Calu3 (cell line): ENCODE measurements at regions of chr1 and their contacts with region 1.

Region 1: DNA sequence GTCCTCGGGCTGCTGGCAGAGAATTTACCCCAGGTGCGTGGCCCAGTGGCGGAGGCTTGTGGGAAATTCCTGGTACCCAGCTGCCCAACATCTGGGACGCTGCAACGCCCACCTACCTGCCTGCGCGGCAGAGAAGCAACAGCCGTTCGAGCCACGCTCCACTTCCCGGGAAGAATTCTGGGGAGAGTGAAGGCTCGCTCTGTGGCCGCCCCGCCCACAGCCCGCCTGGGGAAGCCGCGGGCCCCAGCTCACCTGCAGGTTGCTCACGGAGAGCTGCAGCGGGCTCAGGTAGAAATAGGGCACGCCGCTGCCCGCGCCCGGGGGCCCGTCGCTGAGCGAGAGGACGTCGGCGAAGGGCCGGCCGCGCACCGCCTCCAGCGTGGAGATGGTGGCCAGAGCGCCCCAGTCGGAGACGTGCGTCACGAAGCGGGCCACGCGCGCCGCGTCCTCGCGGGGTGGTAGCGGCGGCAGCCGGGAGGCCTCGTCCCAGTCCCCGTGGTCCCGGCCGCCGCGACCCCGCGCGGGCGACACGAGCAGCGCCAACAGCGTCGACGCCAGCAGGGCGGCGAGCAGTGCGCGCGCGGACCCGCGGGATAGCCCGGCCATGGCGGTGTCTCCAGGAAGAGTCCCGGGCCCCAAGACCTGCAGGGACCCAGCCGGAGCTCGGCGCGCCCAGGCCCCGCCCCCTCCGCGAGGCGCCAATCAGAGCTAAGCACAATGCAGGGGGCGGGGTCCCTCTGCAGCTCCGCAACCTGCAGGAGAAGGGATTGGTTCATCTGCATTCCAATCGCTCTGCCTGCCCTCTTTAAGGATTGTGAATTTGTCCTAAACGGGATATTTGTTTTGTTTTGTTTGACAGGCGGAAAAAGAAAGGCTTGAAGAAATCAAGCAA is at the start of gene CREG1:
- DNase-seq: peak; percentile 99
- H3K4me3 Mint-ChIP-seq: peak within 1 kb of the TSS; percentile 77
- H3K27ac Mint-ChIP-seq: peak within 1 kb of the TSS; percentile 46
- H3K4me1 Mint-ChIP-seq: peaks cover 20% of the 10 kb centered on the region
- H3K27me3 Mint-ChIP-seq: no peaks in the 10 kb centered on the region
- CTCF ChIP-seq: no peak
- total RNA-seq, gene CREG1: 55.0 and 69.3 TPM in 2 replicates

Region 2: GRCh38 chr1:167563579-167564246 is 10.3 kb after region 1 on chr1:
- CTCF ChIA-PET with region 1: interaction called, 12 read pairs
- intact Hi-C with region 1: no loop called
- DNase-seq: peak; percentile 37
- H3K4me3 Mint-ChIP-seq: no peak overlapping the region
- H3K27ac Mint-ChIP-seq: peak overlapping the region; percentile 14
- H3K4me1 Mint-ChIP-seq: peaks cover 22% of the 10 kb centered on the region
- H3K27me3 Mint-ChIP-seq: no peaks in the 10 kb centered on the region
- CTCF ChIP-seq: no peak